Mammary epithelial cell (primary cell): ENCODE measurements at regions of chr19 and their contacts with region 1.

Region 1: DNA sequence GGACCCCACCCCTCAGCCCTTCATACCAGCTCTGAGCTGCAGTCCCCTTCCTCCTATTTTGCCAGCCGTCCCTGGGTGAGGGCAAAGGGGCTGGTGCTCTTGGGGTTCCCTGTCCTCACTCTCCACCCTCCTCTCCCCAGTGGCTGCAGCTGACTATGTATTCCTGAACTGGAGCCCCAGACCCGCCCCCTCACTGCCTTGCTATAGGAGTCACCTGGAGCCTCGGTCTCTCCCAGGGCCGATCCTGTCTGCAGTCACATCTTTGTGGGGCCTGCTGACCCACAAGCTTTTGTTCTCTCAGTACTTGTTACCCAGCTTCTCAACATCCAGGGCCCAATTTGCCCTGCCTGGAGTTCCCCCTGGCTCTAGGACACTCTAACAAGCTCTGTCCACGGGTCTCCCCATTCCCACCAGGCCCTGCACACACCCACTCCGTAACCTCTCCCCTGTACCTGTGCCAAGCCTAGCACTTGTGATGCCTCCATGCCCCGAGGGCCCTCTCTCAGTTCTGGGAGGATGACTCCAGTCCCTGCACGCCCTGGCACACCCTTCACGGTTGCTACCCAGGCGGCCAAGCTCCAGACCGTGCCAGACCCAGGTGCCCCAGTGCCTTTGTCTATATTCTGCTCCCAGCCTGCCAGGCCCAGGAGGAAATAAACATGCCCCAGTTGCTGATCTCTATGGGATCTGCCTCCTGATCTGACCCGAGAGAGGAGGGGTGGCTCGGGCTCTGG is 2.4 kb downstream of the COX7A1 start:
- DNase-seq: peak; percentile 86
- H3K4me3 ChIP-seq: no peak overlapping the region
- H3K27ac ChIP-seq: peak overlapping the region; percentile 25
- H3K4me1 ChIP-seq: peaks cover 23% of the 10 kb centered on the region
- H3K27me3 ChIP-seq: no peaks in the 10 kb centered on the region
- CTCF ChIP-seq: no peak

Region 2: DNA sequence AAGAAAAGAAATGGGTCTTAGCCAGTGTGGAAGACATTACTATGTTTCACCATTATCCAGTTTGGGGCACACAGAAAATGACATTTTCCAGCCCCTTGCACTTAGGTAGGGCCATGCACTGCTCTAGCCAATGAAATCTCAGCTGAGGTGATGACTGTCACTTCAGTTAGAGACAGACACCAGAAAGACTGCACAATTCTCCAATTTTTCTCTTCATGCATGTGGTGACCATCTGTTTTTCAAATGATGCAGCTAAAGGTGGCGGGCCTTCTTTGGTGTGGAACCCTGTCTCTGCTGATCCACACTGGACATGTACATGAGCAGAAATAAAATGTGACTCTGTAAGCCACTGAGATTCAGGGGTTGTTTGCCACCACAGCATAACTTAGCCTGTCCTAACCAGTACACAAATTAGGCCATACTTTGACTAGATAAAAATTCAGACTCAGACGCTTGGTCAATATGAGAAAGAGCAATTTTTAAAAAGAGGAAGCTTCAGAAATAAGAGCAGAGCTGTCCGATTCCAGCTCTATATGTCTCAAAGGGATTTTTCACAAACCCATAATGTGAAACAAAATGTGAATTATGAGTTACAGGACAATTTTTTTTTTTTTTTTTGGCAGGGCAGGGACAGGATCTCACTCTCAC is 57.9 kb after region 1 on chr19:
- CTCF ChIA-PET with region 1: no interaction called
- dilution Hi-C with region 1: loop called (anchors 5 kb)
- in situ Hi-C with region 1: no loop called
- intact Hi-C with region 1: no loop called
- DNase-seq: no peak
- H3K4me3 ChIP-seq: no peak overlapping the region
- H3K27ac ChIP-seq: no peak overlapping the region
- H3K4me1 ChIP-seq: no peaks in the 10 kb centered on the region
- H3K27me3 ChIP-seq: no peaks in the 10 kb centered on the region
- CTCF ChIP-seq: no peak